ENCODE measurements at regions of chrX and their contacts with region 1.

Region 1: DNA sequence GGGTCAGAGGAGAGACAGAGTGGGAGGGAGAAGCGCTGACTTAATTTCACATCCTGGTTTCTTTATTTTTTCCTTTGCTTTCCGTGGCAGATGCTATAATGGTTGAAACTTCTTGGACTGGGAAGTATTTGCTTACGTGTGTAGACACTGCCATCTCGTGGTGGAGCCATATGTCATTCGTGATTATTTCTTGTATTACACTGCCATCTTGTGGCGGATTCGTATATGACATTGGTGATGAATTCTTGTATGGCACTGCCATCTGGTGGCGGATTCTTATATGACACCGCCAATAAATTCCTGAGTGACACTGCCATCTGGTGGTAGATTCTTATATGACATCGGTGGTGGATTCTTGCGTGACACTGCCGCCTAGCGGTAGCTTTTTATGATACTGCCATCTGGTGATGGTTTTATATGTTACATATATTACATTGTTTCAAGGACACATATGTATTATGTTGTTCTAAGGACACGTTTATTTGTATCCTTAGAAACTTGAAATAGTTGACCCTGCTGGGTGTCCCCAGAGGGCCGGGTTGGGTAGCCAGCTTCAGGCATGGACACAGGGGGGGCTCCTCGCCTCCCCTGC is 37.3 kb upstream of the CLCN4 start:
- DNase-seq: peak in 4 of 5 donors; percentile 53 to 75 (median 64)
- ATAC-seq: peak; percentile 44 to 80 (median 66)
- H3K4me3 ChIP-seq: no peak overlapping the region
- H3K27ac ChIP-seq: peak overlapping the region in 4 of 12 donors; percentile 0 to 45 (median 8)
- H3K4me1 ChIP-seq: peaks cover 0 to 32% (median 7%) of the 10 kb centered on the region in 12 donors
- H3K27me3 ChIP-seq: no peaks in the 10 kb centered on the region
- CTCF ChIP-seq: peak; percentile 97 to 100 (median 100)
- POLR2A ChIP-seq: no peak

Region 2: DNA sequence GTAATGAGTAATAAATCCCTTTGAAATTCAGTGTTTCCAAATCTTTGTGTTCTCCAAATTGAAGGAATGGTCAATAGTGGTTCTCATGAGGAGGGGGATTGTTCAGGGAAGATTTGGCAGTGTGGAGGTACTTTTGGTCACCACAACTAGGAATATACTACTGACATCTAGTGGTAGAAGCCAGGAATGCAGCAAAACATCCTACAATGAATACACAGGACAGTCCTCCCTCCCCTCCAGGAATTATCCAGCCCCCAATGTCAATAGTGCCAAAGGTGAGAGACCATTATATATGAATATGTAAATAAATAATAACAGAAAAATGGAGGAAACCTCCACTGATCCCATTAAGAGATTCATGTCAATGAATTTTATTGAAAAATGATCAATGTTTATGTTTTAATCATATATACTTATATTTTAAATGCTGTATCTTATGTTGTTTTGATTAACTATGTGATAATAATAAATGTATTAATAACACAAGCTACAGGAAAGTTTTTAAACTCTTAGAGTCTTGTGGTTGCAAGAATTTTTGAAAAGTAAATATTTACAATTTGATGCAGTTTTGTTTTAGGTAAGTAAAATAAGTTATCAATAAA is 1303.9 kb before region 1 on chrX:
- intact Hi-C with region 1: loop called in 1 of 10 experiments (anchors 5 kb)
- DNase-seq: no peak
- ATAC-seq: no peak
- H3K4me3 ChIP-seq: no peak overlapping the region
- H3K27ac ChIP-seq: no peak overlapping the region
- H3K4me1 ChIP-seq: no peaks in the 10 kb centered on the region
- H3K27me3 ChIP-seq: peaks cover 0 to 8% (median 0%) of the 10 kb centered on the region in 9 donors
- CTCF ChIP-seq: peak; percentile 46 to 82 (median 66)
- POLR2A ChIP-seq: no peak

Region 3: DNA sequence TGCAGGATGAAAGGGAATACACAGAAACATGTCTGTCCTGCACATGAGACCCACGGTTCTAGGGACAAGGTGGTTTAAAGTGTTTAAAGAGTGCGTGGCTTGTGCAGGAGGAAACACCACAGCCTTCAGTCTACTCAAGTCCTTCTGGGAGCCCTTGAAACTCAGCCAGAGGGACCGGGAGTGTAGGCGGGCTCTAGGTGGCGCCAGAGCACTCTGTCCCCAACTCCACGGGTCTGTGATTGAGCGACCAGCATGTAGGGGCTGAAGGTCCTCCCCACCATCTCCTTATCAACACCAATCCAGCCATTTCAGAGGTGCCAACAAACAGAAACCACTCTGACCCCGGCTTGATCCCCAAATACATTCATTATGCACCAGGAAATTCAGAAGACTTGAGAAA is 234.3 kb before region 1 on chrX:
- intact Hi-C with region 1: loop called in 7 of 10 experiments (anchors 5 to 10 kb)
- DNase-seq: peak; percentile 29 to 75 (median 56)
- ATAC-seq: peak in 3 of 4 donors; percentile 67 to 78 (median 73)
- H3K4me3 ChIP-seq: no peak overlapping the region
- H3K27ac ChIP-seq: no peak overlapping the region
- H3K4me1 ChIP-seq: peaks cover 0 to 10% (median 0%) of the 10 kb centered on the region in 12 donors
- H3K27me3 ChIP-seq: peaks cover 0 to 25% (median 0%) of the 10 kb centered on the region in 9 donors
- CTCF ChIP-seq: peak; percentile 32 to 60 (median 48)
- POLR2A ChIP-seq: no peak

Region 4: GRCh38 chrX:9995855-9996339 is 123.6 kb before region 1 on chrX:
- intact Hi-C with region 1: loop called (anchors 1 to 2 kb)
- DNase-seq: peak; percentile 77 to 90 (median 82)
- ATAC-seq: peak; percentile 88 to 93 (median 88)
- H3K4me3 ChIP-seq: no peak overlapping the region
- H3K27ac ChIP-seq: no peak overlapping the region
- H3K4me1 ChIP-seq: peaks cover 0 to 5% (median 0%) of the 10 kb centered on the region in 12 donors
- H3K27me3 ChIP-seq: no peaks in the 10 kb centered on the region
- CTCF ChIP-seq: peak; percentile 81 to 96 (median 90)
- POLR2A ChIP-seq: no peak

Region 5: GRCh38 chrX:10030570-10030969 is 88.9 kb before region 1 on chrX:
- intact Hi-C with region 1: no loop called
- DNase-seq: no peak
- ATAC-seq: no peak
- H3K4me3 ChIP-seq: no peak overlapping the region
- H3K27ac ChIP-seq: no peak overlapping the region
- H3K4me1 ChIP-seq: peaks cover 0 to 37% (median 7%) of the 10 kb centered on the region in 12 donors
- H3K27me3 ChIP-seq: peaks cover 0 to 5% (median 0%) of the 10 kb centered on the region in 9 donors
- CTCF ChIP-seq: no peak
- POLR2A ChIP-seq: no peak

Region 6: DNA sequence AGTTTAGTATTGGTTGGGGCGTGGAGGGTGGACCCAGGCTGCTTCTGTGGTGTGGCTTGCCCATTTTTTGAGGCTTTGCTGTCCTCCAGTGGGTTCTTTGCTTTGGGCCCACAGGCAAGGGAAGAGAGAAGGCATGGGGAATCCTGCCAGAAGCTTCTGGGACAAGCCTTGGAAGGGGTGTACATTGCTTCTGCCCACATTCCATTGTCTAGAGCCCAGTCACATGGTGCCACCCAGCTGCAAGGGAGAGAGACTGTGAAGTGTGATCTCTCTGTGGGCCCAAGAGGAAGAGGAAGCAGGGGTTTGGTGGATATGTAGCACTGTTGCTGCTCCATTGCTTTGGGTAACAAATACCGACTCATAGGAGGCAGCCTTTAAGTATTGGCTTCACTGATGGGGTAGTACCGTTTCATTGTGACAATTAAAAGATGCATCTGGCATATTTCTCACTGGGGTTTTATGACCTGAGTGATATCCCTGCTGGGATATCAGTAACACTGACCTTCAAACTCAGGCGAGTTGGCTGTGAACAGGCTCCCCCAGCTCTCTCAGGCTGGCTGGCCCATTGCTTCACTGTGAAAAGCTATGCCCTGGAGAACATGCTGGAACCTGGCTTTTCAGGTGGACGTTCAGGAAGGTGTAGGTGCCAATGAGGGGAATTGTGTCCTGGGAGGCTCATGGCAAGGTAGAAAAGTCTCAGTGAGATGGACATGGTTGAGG is 66.4 kb before region 1 on chrX:
- intact Hi-C with region 1: loop called in 2 of 10 experiments (anchors 2 to 10 kb)
- DNase-seq: peak in 4 of 5 donors; percentile 30 to 56 (median 40)
- ATAC-seq: peak; percentile 71 to 87 (median 82)
- H3K4me3 ChIP-seq: no peak overlapping the region
- H3K27ac ChIP-seq: peak overlapping the region; percentile 32 to 75 (median 58)
- H3K4me1 ChIP-seq: peaks cover 0 to 63% (median 35%) of the 10 kb centered on the region in 12 donors
- H3K27me3 ChIP-seq: peaks cover 0 to 4% (median 0%) of the 10 kb centered on the region in 9 donors
- CTCF ChIP-seq: peak in 1 of 12 donors; percentile 6
- POLR2A ChIP-seq: no peak

Region 7: DNA sequence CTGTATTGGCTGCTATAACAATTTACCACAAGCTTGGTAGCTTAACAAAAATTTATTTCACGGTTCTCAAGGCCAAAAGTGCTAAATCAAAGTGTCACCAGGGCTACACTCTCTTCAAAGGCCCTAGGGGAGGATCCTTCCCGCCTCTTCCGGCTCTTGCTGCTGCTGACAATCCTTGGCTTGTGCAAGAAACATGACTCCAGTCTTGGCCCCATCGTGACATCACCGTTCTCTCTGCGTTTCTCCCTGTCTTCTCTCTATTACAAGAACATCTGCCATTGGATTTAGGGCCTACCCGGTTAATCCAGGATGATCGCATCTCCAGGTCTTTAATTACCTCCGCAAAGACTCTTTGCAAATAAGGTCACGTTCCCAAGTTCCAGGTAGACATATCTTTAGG is 26.9 kb after region 1 on chrX:
- intact Hi-C with region 1: no loop called
- DNase-seq: no peak
- ATAC-seq: no peak
- H3K4me3 ChIP-seq: no peak overlapping the region
- H3K27ac ChIP-seq: no peak overlapping the region
- H3K4me1 ChIP-seq: no peaks in the 10 kb centered on the region
- H3K27me3 ChIP-seq: no peaks in the 10 kb centered on the region
- CTCF ChIP-seq: no peak
- POLR2A ChIP-seq: no peak

Measured in heart left ventricle (tissue), 16 donors.